B cell (primary cell): ENCODE measurements at regions of chr17 and their contacts with region 1.

Region 1: GRCh38 chr17:38667099-38667786 is 7.5 kb downstream of the EPOP start:
- DNase-seq: peak; percentile 72
- ATAC-seq: peak; percentile 76
- H3K4me3 ChIP-seq: no peak overlapping the region
- H3K4me3 Mint-ChIP-seq: no peak overlapping the region
- H3K27ac ChIP-seq: no peak overlapping the region
- H3K27ac Mint-ChIP-seq: no peak overlapping the region
- H3K4me1 ChIP-seq: peaks cover 3 to 4% of the 10 kb centered on the region in 2 donors
- H3K4me1 Mint-ChIP-seq: peaks cover 7% of the 10 kb centered on the region
- H3K27me3 ChIP-seq: peaks cover 0 to 72% (median 29%) of the 10 kb centered on the region in 4 experiments
- H3K27me3 Mint-ChIP-seq: peaks cover 64% of the 10 kb centered on the region
- CTCF ChIP-seq: peak; percentile 98

Region 2: GRCh38 chr17:38444151-38444550 is 223.1 kb before region 1 on chr17:
- CTCF ChIA-PET with region 1: interaction called, 14 read pairs
- POLR2A ChIA-PET with region 1: no interaction called
- intact Hi-C with region 1: no loop called
- DNase-seq: peak; percentile 55
- ATAC-seq: peak; percentile 67
- H3K4me3 ChIP-seq: no peak overlapping the region
- H3K4me3 Mint-ChIP-seq: no peak overlapping the region
- H3K27ac ChIP-seq: no peak overlapping the region
- H3K27ac Mint-ChIP-seq: no peak overlapping the region
- H3K4me1 ChIP-seq: no peaks in the 10 kb centered on the region
- H3K4me1 Mint-ChIP-seq: peaks cover 3% of the 10 kb centered on the region
- H3K27me3 ChIP-seq: peaks cover 0 to 11% (median 0%) of the 10 kb centered on the region in 4 experiments
- H3K27me3 Mint-ChIP-seq: peaks cover 16% of the 10 kb centered on the region
- CTCF ChIP-seq: peak; percentile 65

Region 3: GRCh38 chr17:38557836-38558727 is 109.2 kb before region 1 on chr17:
- CTCF ChIA-PET with region 1: interaction called, 161 read pairs
- POLR2A ChIA-PET with region 1: no interaction called
- intact Hi-C with region 1: no loop called
- DNase-seq: peak; percentile 93
- ATAC-seq: peak; percentile 76
- H3K4me3 ChIP-seq: peak overlapping the region; percentile 40 to 90 (median 66)
- H3K4me3 Mint-ChIP-seq: peak overlapping the region; percentile 99
- H3K27ac ChIP-seq: no peak overlapping the region
- H3K27ac Mint-ChIP-seq: peak overlapping the region; percentile 88
- H3K4me1 ChIP-seq: peaks cover 23 to 38% of the 10 kb centered on the region in 2 donors
- H3K4me1 Mint-ChIP-seq: peaks cover 30% of the 10 kb centered on the region
- H3K27me3 ChIP-seq: peaks cover 0 to 31% (median 20%) of the 10 kb centered on the region in 4 experiments
- H3K27me3 Mint-ChIP-seq: peaks cover 27% of the 10 kb centered on the region
- CTCF ChIP-seq: peak; percentile 92

Region 4: DNA sequence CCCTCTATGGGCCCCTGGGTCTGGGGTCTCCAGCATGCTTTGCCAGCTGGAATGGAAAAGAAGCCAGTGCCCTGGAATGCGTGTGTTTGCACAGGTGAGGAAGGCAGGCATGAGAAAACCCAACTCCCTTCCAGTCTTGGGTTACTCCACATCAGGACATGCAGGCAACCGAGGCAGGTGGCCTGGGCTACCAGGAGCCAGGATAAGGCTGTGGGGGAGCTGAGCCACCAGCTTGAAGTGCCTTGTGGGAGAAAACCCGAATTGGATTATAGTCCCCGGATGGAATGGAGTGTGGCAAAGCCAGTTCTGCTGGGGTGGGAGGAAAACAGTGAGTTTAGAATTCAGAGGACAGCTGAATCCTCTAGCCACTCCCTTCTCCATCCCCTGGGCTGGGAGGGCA is 68.7 kb before region 1 on chr17:
- CTCF ChIA-PET with region 1: no interaction called
- POLR2A ChIA-PET with region 1: no interaction called
- intact Hi-C with region 1: no loop called
- DNase-seq: no peak
- ATAC-seq: no peak
- H3K4me3 ChIP-seq: no peak overlapping the region
- H3K4me3 Mint-ChIP-seq: no peak overlapping the region
- H3K27ac ChIP-seq: no peak overlapping the region
- H3K27ac Mint-ChIP-seq: no peak overlapping the region
- H3K4me1 ChIP-seq: peaks cover 0 to 3% of the 10 kb centered on the region in 2 donors
- H3K4me1 Mint-ChIP-seq: peaks cover 2% of the 10 kb centered on the region
- H3K27me3 ChIP-seq: peaks cover 0 to 92% (median 34%) of the 10 kb centered on the region in 4 experiments
- H3K27me3 Mint-ChIP-seq: peaks cover 77% of the 10 kb centered on the region
- CTCF ChIP-seq: no peak

Region 5: GRCh38 chr17:38729886-38730525 is 62.8 kb after region 1 on chr17 and contains the start of gene CISD3:
- CTCF ChIA-PET with region 1: interaction called, 34 read pairs
- POLR2A ChIA-PET with region 1: no interaction called
- intact Hi-C with region 1: no loop called
- DNase-seq: peak; percentile 92
- ATAC-seq: peak; percentile 91
- H3K4me3 ChIP-seq: peak within 1 kb of the TSS; percentile 13 to 85 (median 62)
- H3K4me3 Mint-ChIP-seq: peak within 1 kb of the TSS; percentile 87
- H3K27ac ChIP-seq: peak within 1 kb of the TSS; percentile 79
- H3K27ac Mint-ChIP-seq: peak within 1 kb of the TSS; percentile 89
- H3K4me1 ChIP-seq: peaks cover 32 to 60% of the 10 kb centered on the region in 2 donors
- H3K4me1 Mint-ChIP-seq: peaks cover 59% of the 10 kb centered on the region
- H3K27me3 ChIP-seq: no peaks in the 10 kb centered on the region
- H3K27me3 Mint-ChIP-seq: no peaks in the 10 kb centered on the region
- CTCF ChIP-seq: peak; percentile 71
- total RNA-seq, gene CISD3: 11.3 TPM in 2 replicates

Region 6: GRCh38 chr17:38912221-38912813 is 245.1 kb after region 1 on chr17:
- CTCF ChIA-PET with region 1: no interaction called
- POLR2A ChIA-PET with region 1: no interaction called
- intact Hi-C with region 1: no loop called
- DNase-seq: no peak
- ATAC-seq: no peak
- H3K4me3 ChIP-seq: no peak overlapping the region
- H3K4me3 Mint-ChIP-seq: no peak overlapping the region
- H3K27ac ChIP-seq: no peak overlapping the region
- H3K27ac Mint-ChIP-seq: no peak overlapping the region
- H3K4me1 ChIP-seq: peaks cover under 1 to 13% of the 10 kb centered on the region in 2 donors
- H3K4me1 Mint-ChIP-seq: peaks cover 12% of the 10 kb centered on the region
- H3K27me3 ChIP-seq: no peaks in the 10 kb centered on the region
- H3K27me3 Mint-ChIP-seq: no peaks in the 10 kb centered on the region
- CTCF ChIP-seq: no peak